ENCODE measurements at regions of chr5 and their contacts with region 1.

Region 1: GRCh38 chr5:142255831-142256230 is 69.0 kb downstream of the SPRY4 start:
- DNase-seq: no peak
- ATAC-seq: no peak
- H3K4me3 Mint-ChIP-seq: no peak overlapping the region
- H3K27ac Mint-ChIP-seq: no peak overlapping the region
- H3K4me1 Mint-ChIP-seq: no peaks in the 10 kb centered on the region
- H3K27me3 Mint-ChIP-seq: no peaks in the 10 kb centered on the region
- CTCF ChIP-seq: no peak

Region 2: GRCh38 chr5:141960449-141961202 is 295.2 kb before region 1 on chr5:
- CTCF ChIA-PET with region 1: no interaction called
- POLR2A ChIA-PET with region 1: no interaction called
- intact Hi-C with region 1: no loop called
- DNase-seq: peak; percentile 94
- ATAC-seq: peak; percentile 88
- H3K4me3 Mint-ChIP-seq: peak overlapping the region; percentile 44
- H3K27ac Mint-ChIP-seq: peak overlapping the region; percentile 80
- H3K4me1 Mint-ChIP-seq: peaks cover 45% of the 10 kb centered on the region
- H3K27me3 Mint-ChIP-seq: no peaks in the 10 kb centered on the region
- CTCF ChIP-seq: peak; percentile 62

Region 3: DNA sequence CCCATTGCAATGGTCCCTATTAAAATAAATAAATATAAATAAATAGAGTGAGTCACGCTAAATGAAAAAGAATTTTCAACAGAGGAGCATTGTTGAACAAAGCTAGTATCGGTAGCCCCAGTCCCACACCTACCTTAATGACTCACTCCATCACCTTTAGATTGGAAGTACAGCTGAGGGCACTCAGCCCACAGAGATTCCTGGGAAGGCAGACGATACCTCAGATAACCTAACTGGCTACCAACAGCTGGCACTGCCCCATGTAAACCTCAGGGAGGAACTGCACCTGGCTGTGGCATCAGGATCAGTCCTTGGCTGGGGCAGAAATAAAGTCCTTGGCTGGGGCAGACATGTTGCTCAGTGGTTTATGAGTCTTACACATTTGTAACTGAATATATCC is 19.7 kb after region 1 on chr5:
- CTCF ChIA-PET with region 1: no interaction called
- POLR2A ChIA-PET with region 1: no interaction called
- intact Hi-C with region 1: loop called (anchors 2 kb)
- DNase-seq: no peak
- ATAC-seq: no peak
- H3K4me3 Mint-ChIP-seq: no peak overlapping the region
- H3K27ac Mint-ChIP-seq: no peak overlapping the region
- H3K4me1 Mint-ChIP-seq: no peaks in the 10 kb centered on the region
- H3K27me3 Mint-ChIP-seq: peaks cover 2% of the 10 kb centered on the region
- CTCF ChIP-seq: no peak

Measured in activated CD8-positive, alpha-beta T cell treated with anti-CD3 and anti-CD28 coated beads for 36 hours (primary cell).